ENCODE measurements at regions of chr5 and their contacts with region 1.

Region 1: DNA sequence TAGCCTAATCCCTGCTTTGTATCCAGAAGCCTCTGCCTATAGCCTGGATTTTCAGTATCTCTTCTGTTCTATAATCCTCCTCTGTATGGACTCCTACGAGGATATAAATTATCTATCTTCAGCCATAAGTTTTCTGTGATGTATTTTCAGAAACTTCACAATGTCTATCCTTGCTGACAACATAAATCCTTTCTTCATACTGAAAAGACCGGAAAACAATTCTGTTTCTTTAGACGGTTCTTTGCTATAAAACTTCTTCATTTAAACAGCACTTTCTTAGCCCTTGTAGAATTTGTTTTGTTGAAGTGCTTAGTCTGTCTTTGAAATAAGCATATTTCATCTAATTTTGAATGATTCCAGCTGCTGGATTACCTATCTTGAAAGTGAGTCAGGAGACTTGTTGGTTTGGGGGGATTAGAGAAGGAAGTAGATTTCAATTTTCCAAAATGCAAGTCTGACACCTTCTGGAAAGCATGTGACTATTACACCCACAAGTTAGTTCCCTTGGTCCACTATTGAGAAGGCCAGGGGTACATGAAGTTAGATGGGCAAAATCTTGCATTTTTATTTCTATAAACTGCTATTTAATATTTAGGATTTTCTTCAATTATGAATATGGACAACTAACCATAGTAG is 96.3 kb upstream of the RANBP3L start:
- DNase-seq: peak in 1 of 2 experiments; percentile 48
- H3K4me3 ChIP-seq: no peak overlapping the region
- H3K4me3 Mint-ChIP-seq: no peak overlapping the region
- H3K27ac Mint-ChIP-seq: no peak overlapping the region
- H3K4me1 ChIP-seq: peaks cover 46% of the 10 kb centered on the region
- H3K4me1 Mint-ChIP-seq: peaks cover 35% of the 10 kb centered on the region
- H3K27me3 ChIP-seq: no peaks in the 10 kb centered on the region
- H3K27me3 Mint-ChIP-seq: no peaks in the 10 kb centered on the region
- CTCF ChIP-seq: peak; percentile 50 to 64

Region 2: DNA sequence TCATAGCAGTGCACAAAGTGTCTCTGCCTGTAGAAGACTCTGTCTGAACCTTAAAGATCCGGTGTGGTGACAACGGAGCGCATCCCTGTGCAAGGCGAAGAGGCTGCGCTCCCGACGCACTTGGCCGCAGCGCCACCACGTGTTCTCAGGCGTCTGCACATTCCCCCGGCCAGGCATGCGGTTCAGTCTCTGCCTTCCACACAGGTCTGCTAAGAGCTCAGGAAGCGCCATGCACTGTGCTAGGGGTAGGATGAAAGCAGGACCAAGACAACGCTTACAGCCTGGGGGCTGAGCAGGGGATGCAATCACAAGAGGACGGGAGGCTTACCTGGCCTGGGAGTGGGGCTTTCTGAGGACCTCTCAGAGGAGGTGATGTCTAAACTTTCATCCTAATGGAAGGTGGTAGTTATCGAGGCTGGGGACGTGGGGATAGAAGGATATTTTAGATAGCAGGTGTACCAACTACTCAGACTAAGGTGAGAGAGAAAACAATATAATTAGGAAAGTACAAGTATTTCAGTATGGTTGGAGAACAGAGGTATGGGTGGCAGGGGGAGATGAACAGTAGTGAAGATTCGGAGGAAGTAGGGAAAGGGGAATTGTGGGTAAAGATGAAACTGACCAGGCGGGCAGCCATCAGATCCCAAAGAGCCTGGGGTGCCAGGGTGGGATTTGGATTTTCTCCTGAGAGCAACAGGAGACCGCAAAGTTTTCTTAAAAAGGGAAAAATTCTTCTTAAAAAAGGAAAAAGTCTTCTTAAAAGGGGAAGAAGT is 472.9 kb before region 1 on chr5:
- CTCF ChIA-PET with region 1: no interaction called
- POLR2A ChIA-PET with region 1: no interaction called
- intact Hi-C with region 1: no loop called
- DNase-seq: peak; percentile 59 to 64
- H3K4me3 ChIP-seq: no peak overlapping the region
- H3K4me3 Mint-ChIP-seq: peak overlapping the region; percentile 52
- H3K27ac Mint-ChIP-seq: no peak overlapping the region
- H3K4me1 ChIP-seq: no peaks in the 10 kb centered on the region; the same call in 1 of the 2 replicates
- H3K4me1 Mint-ChIP-seq: peaks cover 7% of the 10 kb centered on the region
- H3K27me3 ChIP-seq: peaks cover 2% of the 10 kb centered on the region; the same call in 1 of the 2 replicates
- H3K27me3 Mint-ChIP-seq: peaks cover 22% of the 10 kb centered on the region
- CTCF ChIP-seq: peak; percentile 57 to 83

Region 3: GRCh38 chr5:35938568-35939227 is 459.3 kb before region 1 on chr5 and contains the start of gene CAPSL:
- CTCF ChIA-PET with region 1: no interaction called
- POLR2A ChIA-PET with region 1: no interaction called
- intact Hi-C with region 1: no loop called
- DNase-seq: peak; percentile 56 to 75
- H3K4me3 ChIP-seq: no peak within 1 kb of the TSS
- H3K4me3 Mint-ChIP-seq: no peak within 1 kb of the TSS
- H3K27ac Mint-ChIP-seq: no peak within 1 kb of the TSS
- H3K4me1 ChIP-seq: no peaks in the 10 kb centered on the region
- H3K4me1 Mint-ChIP-seq: no peaks in the 10 kb centered on the region
- H3K27me3 ChIP-seq: no peaks in the 10 kb centered on the region
- H3K27me3 Mint-ChIP-seq: no peaks in the 10 kb centered on the region
- CTCF ChIP-seq: no peak
- total RNA-seq, gene CAPSL: not detected in 2 replicates

Region 4: DNA sequence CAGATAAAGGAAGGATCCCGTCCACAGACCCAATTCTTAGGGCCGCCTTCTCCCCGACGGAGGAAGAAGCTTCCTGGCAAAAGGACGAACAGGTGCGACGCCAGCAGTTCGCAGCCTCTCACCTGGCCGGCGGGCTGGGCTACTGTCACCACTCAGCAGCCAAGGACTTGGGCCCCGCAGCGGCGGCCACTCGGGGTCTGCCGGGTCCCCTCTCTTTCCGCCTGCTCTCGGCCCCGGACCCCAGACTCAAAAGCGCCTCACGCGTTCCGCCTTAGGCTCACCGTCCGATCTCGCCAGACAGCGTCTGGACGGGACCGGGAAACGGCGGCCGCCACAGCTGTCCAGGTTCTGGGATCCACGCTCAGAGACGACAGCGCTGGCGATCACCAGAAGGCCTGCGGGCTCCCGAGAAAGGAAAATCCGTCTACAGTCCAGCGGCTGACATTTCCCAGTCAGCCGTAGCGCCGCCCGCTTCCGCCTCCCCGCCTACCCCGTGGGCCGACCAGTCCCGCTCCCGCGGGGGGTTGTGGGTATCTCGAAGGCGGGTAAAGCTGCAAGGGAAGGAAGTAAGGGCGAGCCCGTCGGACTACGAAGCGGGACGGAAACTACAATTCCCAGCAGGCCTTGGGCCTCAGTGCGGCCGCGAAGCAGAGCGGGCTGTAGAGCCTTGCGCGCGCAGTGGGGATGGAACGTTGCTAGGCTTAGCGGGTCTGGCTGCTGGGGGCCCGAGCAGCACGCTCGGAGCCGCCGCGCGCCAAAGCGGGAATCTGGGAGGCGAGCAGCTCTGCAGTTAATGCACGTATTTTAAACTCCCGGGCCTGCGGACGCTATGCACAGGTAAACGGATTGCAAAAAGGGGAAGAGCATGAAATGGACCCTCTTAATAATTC is 246.3 kb before region 1 on chr5 and contains the starts of genes LMBRD2 and SKP2:
- CTCF ChIA-PET with region 1: no interaction called
- POLR2A ChIA-PET with region 1: interaction called, 3 read pairs
- intact Hi-C with region 1: loop called (anchors 1 kb)
- DNase-seq: peak; percentile 98
- H3K4me3 ChIP-seq: peak within 1 kb of the TSS; percentile 98
- H3K4me3 Mint-ChIP-seq: peak within 1 kb of the TSS; percentile 75
- H3K27ac Mint-ChIP-seq: peak within 1 kb of the TSS; percentile 85
- H3K4me1 ChIP-seq: peaks cover 59% of the 10 kb centered on the region
- H3K4me1 Mint-ChIP-seq: peaks cover 54% of the 10 kb centered on the region
- H3K27me3 ChIP-seq: no peaks in the 10 kb centered on the region
- H3K27me3 Mint-ChIP-seq: no peaks in the 10 kb centered on the region
- CTCF ChIP-seq: no peak
- total RNA-seq, gene LMBRD2: 11.5 and 15.2 TPM in 2 replicates
- total RNA-seq, gene SKP2: 192 and 230 TPM in 2 replicates

Region 5: GRCh38 chr5:36214434-36214833 is 183.6 kb before region 1 on chr5:
- CTCF ChIA-PET with region 1: no interaction called
- POLR2A ChIA-PET with region 1: no interaction called
- intact Hi-C with region 1: loop called (anchors 1 kb)
- DNase-seq: peak in 1 of 2 experiments; percentile 27
- H3K4me3 ChIP-seq: no peak overlapping the region
- H3K4me3 Mint-ChIP-seq: no peak overlapping the region
- H3K27ac Mint-ChIP-seq: no peak overlapping the region
- H3K4me1 ChIP-seq: no peaks in the 10 kb centered on the region; the same call in 1 of the 2 replicates
- H3K4me1 Mint-ChIP-seq: peaks cover 8% of the 10 kb centered on the region
- H3K27me3 ChIP-seq: no peaks in the 10 kb centered on the region
- H3K27me3 Mint-ChIP-seq: no peaks in the 10 kb centered on the region
- CTCF ChIP-seq: peak in 1 of 2 experiments; percentile 22

Region 6: DNA sequence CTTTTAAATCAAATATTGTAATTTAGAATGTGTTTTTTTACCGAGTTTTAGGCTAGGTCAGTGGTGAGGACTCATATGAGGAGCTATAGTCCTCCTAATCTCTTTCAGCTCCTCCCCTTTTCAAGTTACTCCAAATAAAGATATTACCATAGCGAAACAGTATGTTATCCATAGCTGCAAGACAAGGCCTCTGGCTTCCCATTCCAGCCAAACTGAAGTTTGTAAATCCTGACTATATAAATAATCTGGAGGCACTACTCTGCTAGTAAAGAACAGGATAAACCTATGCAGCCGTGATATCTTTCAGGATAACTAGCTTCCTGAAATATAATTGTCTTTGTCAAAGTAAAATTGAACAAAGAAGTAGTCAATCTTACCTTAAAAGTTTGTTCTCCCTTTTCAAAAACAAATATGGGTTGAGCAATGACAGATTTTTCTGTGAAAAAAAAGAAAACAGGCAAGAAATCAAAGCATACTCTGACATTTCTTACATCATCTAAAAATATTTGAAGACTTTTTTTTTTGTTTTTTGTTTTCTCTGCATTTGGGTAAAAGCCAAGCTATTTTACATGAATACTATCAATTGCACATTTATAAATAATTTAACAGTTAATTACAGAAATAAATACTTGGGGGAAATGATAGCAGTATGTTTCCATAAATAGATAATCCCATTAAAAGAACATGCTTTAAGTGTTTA is 127.0 kb before region 1 on chr5:
- CTCF ChIA-PET with region 1: interaction called, 3 read pairs
- POLR2A ChIA-PET with region 1: no interaction called
- intact Hi-C with region 1: loop called (anchors 1 kb)
- DNase-seq: no peak
- H3K4me3 ChIP-seq: no peak overlapping the region
- H3K4me3 Mint-ChIP-seq: no peak overlapping the region
- H3K27ac Mint-ChIP-seq: no peak overlapping the region
- H3K4me1 ChIP-seq: no peaks in the 10 kb centered on the region
- H3K4me1 Mint-ChIP-seq: no peaks in the 10 kb centered on the region
- H3K27me3 ChIP-seq: no peaks in the 10 kb centered on the region
- H3K27me3 Mint-ChIP-seq: no peaks in the 10 kb centered on the region
- CTCF ChIP-seq: no peak

Region 7: GRCh38 chr5:36367524-36367923 is 30.5 kb before region 1 on chr5:
- CTCF ChIA-PET with region 1: interaction called, 4 read pairs
- POLR2A ChIA-PET with region 1: no interaction called
- intact Hi-C with region 1: loop called (anchors 1 kb)
- DNase-seq: peak in 1 of 2 experiments; percentile 51
- H3K4me3 ChIP-seq: no peak overlapping the region
- H3K4me3 Mint-ChIP-seq: no peak overlapping the region
- H3K27ac Mint-ChIP-seq: peak overlapping the region; percentile 1
- H3K4me1 ChIP-seq: peaks cover 21% of the 10 kb centered on the region
- H3K4me1 Mint-ChIP-seq: peaks cover 25% of the 10 kb centered on the region
- H3K27me3 ChIP-seq: no peaks in the 10 kb centered on the region
- H3K27me3 Mint-ChIP-seq: no peaks in the 10 kb centered on the region
- CTCF ChIP-seq: no peak

Measured in Caco-2 (cell line).